ENCODE measurements at regions of chr12 and their contacts with region 1.

Region 1: GRCh38 chr12:96219698-96220206 is 25.6 kb downstream of the ELK3 start:
- DNase-seq: no peak
- H3K4me3 ChIP-seq: no peak overlapping the region
- H3K27ac ChIP-seq: peak overlapping the region in 3 of 4 donors; percentile 7 to 48 (median 43)
- H3K4me1 ChIP-seq: peaks cover 53 to 65% (median 57%) of the 10 kb centered on the region in 4 donors
- H3K27me3 ChIP-seq: no peaks in the 10 kb centered on the region
- CTCF ChIP-seq: no peak
- EP300 ChIP-seq: no peak
- POLR2A ChIP-seq: no peak

Region 2: DNA sequence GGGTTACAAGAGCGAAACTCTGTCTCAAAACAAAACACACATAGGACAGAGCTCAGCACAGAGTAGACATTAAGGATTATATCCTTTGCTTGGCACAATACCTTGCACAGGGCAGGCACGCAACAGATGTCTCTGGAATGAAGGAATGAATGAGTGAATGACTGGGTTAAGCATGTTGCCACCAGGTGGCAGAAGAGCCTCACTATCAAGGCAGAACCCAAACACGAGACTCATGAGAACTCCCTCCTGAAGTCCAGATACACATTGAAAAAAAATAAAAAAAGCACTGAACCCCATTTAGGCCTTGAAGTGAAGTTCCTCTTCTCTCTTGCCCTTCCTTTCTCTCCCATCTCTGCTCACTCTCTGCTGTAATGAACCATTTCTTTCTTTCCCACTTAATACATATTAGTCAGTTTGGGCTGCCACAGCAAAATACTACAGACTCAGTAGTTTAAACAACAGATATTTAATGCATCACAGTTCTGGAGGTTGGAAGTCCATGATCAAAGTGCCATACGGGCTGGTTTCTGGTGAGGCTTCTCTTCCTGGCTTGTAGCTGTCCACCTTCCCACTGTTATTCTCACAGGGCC is 157.8 kb before region 1 on chr12:
- intact Hi-C with region 1: loop called (anchors 1 kb)
- DNase-seq: no peak
- H3K4me3 ChIP-seq: no peak overlapping the region
- H3K27ac ChIP-seq: no peak overlapping the region
- H3K4me1 ChIP-seq: peaks cover 0 to 9% (median 8%) of the 10 kb centered on the region in 4 donors
- H3K27me3 ChIP-seq: no peaks in the 10 kb centered on the region
- CTCF ChIP-seq: peak; percentile 78 to 86 (median 80)
- EP300 ChIP-seq: no peak
- POLR2A ChIP-seq: no peak

Region 3: DNA sequence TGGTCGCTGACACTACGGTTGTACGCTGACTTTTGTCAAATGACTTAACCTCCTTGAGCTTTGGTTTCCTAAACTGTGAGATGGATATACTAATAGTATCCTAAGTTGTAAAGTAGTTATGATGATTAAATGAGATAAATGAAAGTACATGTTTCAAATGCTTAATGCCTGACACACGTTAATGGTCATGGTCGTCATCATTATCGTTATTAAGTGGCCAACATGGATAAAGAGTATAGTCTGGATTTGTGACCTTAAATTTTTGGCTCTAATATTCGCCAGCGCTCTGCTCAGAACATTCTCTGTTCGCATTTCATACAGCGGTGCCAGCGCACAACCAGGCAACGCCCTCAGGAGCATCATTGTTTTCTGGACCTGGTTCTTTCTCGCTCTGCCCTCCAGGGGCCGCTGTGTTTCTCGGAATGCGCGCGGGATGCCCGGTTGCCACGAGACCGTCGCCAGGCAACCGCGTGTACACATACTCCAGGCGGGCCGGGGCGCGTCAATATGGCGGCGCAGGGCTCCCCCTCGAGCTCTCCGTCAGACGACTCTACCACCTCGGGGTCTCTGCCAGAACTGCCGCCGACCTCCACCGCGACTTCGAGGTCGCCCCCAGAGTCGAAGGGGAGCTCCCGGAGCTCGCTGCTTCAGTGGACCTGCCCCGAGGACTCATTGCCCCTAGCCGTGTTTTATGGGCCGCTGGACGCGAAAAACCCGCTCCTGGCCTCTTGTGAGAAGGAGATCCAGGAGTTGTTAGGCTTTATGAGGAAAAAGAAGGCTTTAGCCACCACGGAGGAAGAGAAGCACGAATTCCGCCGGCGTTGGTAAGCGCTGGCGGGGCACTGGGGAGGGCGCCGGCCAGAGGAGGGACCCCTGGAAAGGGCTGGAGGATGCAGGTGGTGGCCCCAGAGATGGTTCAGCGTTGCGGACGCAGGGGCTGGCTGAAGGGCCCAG is 269.6 kb after region 1 on chr12 and contains the start of gene CFAP54:
- intact Hi-C with region 1: loop called (anchors 10 kb)
- DNase-seq: peak; percentile 99
- H3K4me3 ChIP-seq: peak within 1 kb of the TSS; percentile 70 to 88 (median 78)
- H3K27ac ChIP-seq: peak within 1 kb of the TSS; percentile 72 to 90 (median 83)
- H3K4me1 ChIP-seq: peaks cover 4 to 27% (median 12%) of the 10 kb centered on the region in 4 donors
- H3K27me3 ChIP-seq: no peaks in the 10 kb centered on the region
- CTCF ChIP-seq: peak; percentile 79 to 95 (median 93)
- EP300 ChIP-seq: peak; percentile 33
- POLR2A ChIP-seq: no peak
- total RNA-seq, gene CFAP54: 3.0 to 5.8 (median 4.3) TPM

Measured in esophagus muscularis mucosa (tissue), 4 donors.